ENCODE measurements at regions of chr1 and their contacts with region 1.

Region 1: GRCh38 chr1:207828485-207829158 is 76.8 kb downstream of the CD46 start:
- DNase-seq: peak; percentile 86 to 90
- ATAC-seq: peak; percentile 69 to 81
- H3K4me3 ChIP-seq: no peak overlapping the region
- H3K27ac ChIP-seq: peak overlapping the region; percentile 32 to 43; a peak in 4 of 6 replicates
- H3K4me1 ChIP-seq: peaks cover 45% of the 10 kb centered on the region
- CTCF ChIP-seq: peak; percentile 74
- EP300 ChIP-seq: no peak
- POLR2A ChIP-seq: no peak
- RAD21 ChIP-seq: peak; percentile 77 to 80

Region 2: GRCh38 chr1:207805841-207806421 is 22.7 kb before region 1 on chr1:
- CTCF ChIA-PET with region 1: interaction called, 32 read pairs
- POLR2A ChIA-PET with region 1: interaction called, 15 read pairs
- DNase-seq: peak; percentile 55 to 88
- ATAC-seq: peak; percentile 91 to 93
- H3K4me3 ChIP-seq: no peak overlapping the region
- H3K27ac ChIP-seq: peak overlapping the region; percentile 78 to 95
- H3K4me1 ChIP-seq: peaks cover 40% of the 10 kb centered on the region
- CTCF ChIP-seq: no peak
- EP300 ChIP-seq: no peak
- POLR2A ChIP-seq: no peak
- RAD21 ChIP-seq: no peak

Region 3: GRCh38 chr1:207811920-207812720 is 16.5 kb before region 1 on chr1:
- CTCF ChIA-PET with region 1: interaction called, 32 read pairs
- POLR2A ChIA-PET with region 1: interaction called, 15 read pairs
- DNase-seq: peak; percentile 60 to 73
- ATAC-seq: peak; percentile 72 to 90
- H3K4me3 ChIP-seq: no peak overlapping the region
- H3K27ac ChIP-seq: no peak overlapping the region
- H3K4me1 ChIP-seq: peaks cover 18% of the 10 kb centered on the region
- CTCF ChIP-seq: peak; percentile 38
- EP300 ChIP-seq: no peak
- POLR2A ChIP-seq: no peak
- RAD21 ChIP-seq: peak in 1 of 2 experiments; percentile 46; a peak in 3 of 5 replicates

Measured in A549 (cell line).